Posterior vena cava (tissue), 2 donors: ENCODE measurements at regions of chr17 and their contacts with region 1.

Region 1: GRCh38 chr17:1422907-1423306 is 22.9 kb upstream of the YWHAE start:
- DNase-seq: no peak

Region 2: GRCh38 chr17:339193-340061 is 1083.5 kb before region 1 on chr17:
- intact Hi-C with region 1: no loop called
- DNase-seq: no peak

Region 3: GRCh38 chr17:441150-441549 is 981.8 kb before region 1 on chr17:
- intact Hi-C with region 1: no loop called
- DNase-seq: no peak

Region 4: GRCh38 chr17:1275962-1276736 is 146.8 kb before region 1 on chr17:
- intact Hi-C with region 1: loop called in 1 of 2 experiments (anchors 10 kb)
- DNase-seq: peak; percentile 89